ENCODE measurements at regions of chr9 and their contacts with region 1.

Region 1: GRCh38 chr9:70413798-70414775 is at the start of gene KLF9:
- DNase-seq: peak; percentile 86 to 99 (median 91)

Region 2: DNA sequence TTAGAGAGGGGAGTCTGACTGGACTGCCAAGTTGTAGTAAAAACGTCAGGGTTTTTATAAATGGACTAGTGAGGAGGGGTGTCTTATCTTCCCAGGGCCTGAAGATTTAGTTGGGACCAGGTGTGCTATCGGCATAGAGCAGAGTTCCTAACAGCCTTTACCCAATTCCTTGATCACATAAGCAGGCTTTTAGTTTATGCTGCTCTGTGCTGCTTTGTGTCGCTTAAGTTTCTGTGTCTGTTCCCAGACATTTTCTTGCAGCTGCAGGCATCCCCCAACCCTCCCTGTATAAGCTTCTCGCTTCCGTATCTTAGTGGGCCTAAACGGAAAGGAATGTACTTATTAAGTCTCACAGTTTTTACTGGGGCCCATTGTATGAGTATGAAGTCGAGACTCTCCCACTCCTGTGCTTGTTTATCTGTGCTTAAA is 157.9 kb before region 1 on chr9:
- intact Hi-C with region 1: no loop called
- DNase-seq: no peak

Region 3: GRCh38 chr9:70392189-70392588 is 21.9 kb before region 1 on chr9:
- intact Hi-C with region 1: loop called (anchors 2 kb)
- DNase-seq: no peak

Region 4: GRCh38 chr9:70484210-70485130 is 70.4 kb after region 1 on chr9:
- intact Hi-C with region 1: loop called (anchors 2 kb)
- DNase-seq: peak in 1 of 10 donors; percentile 37

Measured in posterior cingulate gyrus (tissue), 11 donors.